Ovary (tissue), 10 donors: ENCODE measurements at regions of chr9 and their contacts with region 1.

Region 1: DNA sequence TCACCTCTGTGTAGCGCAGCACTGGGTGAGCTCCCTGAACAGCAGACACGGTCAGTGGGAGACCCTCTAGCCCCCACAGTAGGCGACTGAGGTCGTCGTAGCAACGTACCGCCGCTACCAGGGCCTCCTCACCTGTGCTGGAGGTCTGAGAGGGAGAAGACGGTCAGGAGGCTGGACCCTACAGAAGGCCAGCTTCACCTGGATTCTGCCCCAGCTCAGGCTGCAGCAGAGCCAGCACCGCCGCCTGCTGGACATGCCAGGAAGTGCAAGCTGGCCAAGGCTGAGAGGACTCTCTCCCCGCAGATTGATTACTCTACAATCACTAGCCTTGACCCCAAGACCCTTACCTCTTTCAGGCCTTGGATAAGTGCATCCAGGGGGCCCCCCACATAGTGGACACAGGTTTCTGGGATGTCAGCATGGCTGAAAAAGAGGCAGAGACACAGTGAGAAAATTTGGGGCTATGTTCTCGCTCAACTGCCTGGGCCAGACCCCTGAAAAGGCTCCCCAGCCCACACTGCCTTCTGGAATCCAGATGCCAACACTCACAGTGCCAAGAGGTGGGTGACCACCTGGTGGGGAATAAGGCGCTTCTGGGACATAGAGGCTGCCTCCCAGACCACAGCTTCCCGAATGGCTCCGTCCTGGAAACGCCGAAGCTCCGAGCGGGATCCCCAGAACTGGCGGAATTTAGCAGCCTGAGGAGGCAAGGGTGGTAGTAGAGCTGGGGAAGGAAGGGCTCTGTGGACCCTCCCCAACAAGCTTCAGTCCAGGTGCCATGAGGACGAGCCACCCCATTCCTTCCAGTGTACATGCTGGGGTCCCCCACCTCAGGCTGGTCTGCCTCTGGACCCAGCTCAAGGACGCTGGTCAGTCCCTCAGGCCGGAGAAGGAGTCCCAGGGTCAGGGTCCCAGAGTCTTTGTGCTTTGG is 6.9 kb downstream of the NOL6 start:
- DNase-seq: peak; percentile 36 to 74 (median 73)
- H3K4me3 ChIP-seq: no peak overlapping the region
- H3K27ac ChIP-seq: peak overlapping the region in 1 of 2 donors; percentile 1
- H3K4me1 ChIP-seq: no peaks in the 10 kb centered on the region
- H3K27me3 ChIP-seq: no peaks in the 10 kb centered on the region
- CTCF ChIP-seq: peak; percentile 75 to 83 (median 80)
- EP300 ChIP-seq: no peak
- POLR2A ChIP-seq: no peak

Region 2: GRCh38 chr9:33287087-33287490 is 179.7 kb before region 1 on chr9:
- intact Hi-C with region 1: loop called in 1 of 4 experiments (anchors 10 kb)
- DNase-seq: peak in 1 of 5 donors; percentile 42
- H3K4me3 ChIP-seq: no peak overlapping the region
- H3K27ac ChIP-seq: no peak overlapping the region
- H3K4me1 ChIP-seq: peaks cover 6% of the 10 kb centered on the region
- H3K27me3 ChIP-seq: no peaks in the 10 kb centered on the region
- CTCF ChIP-seq: peak in 2 of 3 donors; percentile 42 to 47
- EP300 ChIP-seq: no peak
- POLR2A ChIP-seq: no peak

Region 3: GRCh38 chr9:33330005-33330404 is 136.8 kb before region 1 on chr9:
- intact Hi-C with region 1: no loop called
- DNase-seq: no peak
- H3K4me3 ChIP-seq: no peak overlapping the region
- H3K27ac ChIP-seq: no peak overlapping the region
- H3K4me1 ChIP-seq: no peaks in the 10 kb centered on the region
- H3K27me3 ChIP-seq: no peaks in the 10 kb centered on the region
- CTCF ChIP-seq: no peak
- EP300 ChIP-seq: no peak
- POLR2A ChIP-seq: no peak

Region 4: DNA sequence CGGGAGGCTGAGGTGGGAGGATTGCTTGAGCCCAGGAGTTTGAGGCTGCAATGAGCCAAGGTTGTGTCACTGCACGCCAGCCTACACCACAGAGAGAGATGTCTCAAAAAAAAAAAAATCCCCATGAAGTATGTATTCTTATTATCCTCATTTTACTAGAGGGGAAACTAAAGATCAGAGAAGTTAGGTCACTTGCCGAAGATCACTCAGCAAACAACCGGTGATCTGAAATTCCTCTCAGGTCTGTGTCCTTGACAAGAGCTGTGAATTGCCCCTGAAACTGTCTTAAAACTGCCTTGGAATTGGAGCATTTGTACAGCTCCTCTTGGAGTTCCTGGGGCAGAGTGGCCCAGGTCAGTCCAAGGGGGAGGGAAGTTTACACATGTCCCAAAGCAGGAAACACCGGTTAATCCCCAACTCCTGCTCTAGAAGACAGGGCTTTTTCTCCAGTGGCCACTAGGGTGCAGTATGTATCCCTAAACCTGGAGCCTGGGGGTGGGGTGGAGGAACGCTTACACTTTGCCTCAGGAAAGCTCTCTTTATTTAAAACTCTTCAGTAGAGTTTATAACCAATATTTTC is 92.1 kb before region 1 on chr9:
- intact Hi-C with region 1: loop called in 3 of 4 experiments (anchors 2 to 10 kb)
- DNase-seq: peak; percentile 73 to 87 (median 75)
- H3K4me3 ChIP-seq: no peak overlapping the region
- H3K27ac ChIP-seq: no peak overlapping the region
- H3K4me1 ChIP-seq: peaks cover 12% of the 10 kb centered on the region
- H3K27me3 ChIP-seq: no peaks in the 10 kb centered on the region
- CTCF ChIP-seq: peak; percentile 74 to 92 (median 84)
- EP300 ChIP-seq: no peak
- POLR2A ChIP-seq: no peak

Region 5: GRCh38 chr9:33415501-33416038 is 51.3 kb before region 1 on chr9:
- intact Hi-C with region 1: loop called in 1 of 4 experiments (anchors 5 kb)
- DNase-seq: peak; percentile 64 to 82 (median 78)
- H3K4me3 ChIP-seq: no peak overlapping the region
- H3K27ac ChIP-seq: no peak overlapping the region
- H3K4me1 ChIP-seq: peaks cover 2% of the 10 kb centered on the region
- H3K27me3 ChIP-seq: no peaks in the 10 kb centered on the region
- CTCF ChIP-seq: peak; percentile 52 to 63 (median 63)
- EP300 ChIP-seq: no peak
- POLR2A ChIP-seq: no peak

Region 6: GRCh38 chr9:33638391-33638915 is 171.6 kb after region 1 on chr9:
- intact Hi-C with region 1: no loop called
- DNase-seq: no peak
- H3K4me3 ChIP-seq: no peak overlapping the region
- H3K27ac ChIP-seq: no peak overlapping the region
- H3K4me1 ChIP-seq: no peaks in the 10 kb centered on the region
- H3K27me3 ChIP-seq: no peaks in the 10 kb centered on the region
- CTCF ChIP-seq: no peak
- EP300 ChIP-seq: no peak
- POLR2A ChIP-seq: no peak